B cell (primary cell): ENCODE measurements at regions of chr20 and their contacts with region 1.

Region 1: GRCh38 chr20:5529331-5530148 is 212.8 kb upstream of the PROKR2 start:
- DNase-seq: peak; percentile 85
- ATAC-seq: peak; percentile 91
- H3K4me3 ChIP-seq: no peak overlapping the region
- H3K4me3 Mint-ChIP-seq: peak overlapping the region; percentile 54
- H3K27ac ChIP-seq: no peak overlapping the region
- H3K27ac Mint-ChIP-seq: peak overlapping the region; percentile 56
- H3K4me1 ChIP-seq: peaks cover 7 to 12% of the 10 kb centered on the region in 2 donors
- H3K4me1 Mint-ChIP-seq: peaks cover 10% of the 10 kb centered on the region
- H3K27me3 ChIP-seq: no peaks in the 10 kb centered on the region
- H3K27me3 Mint-ChIP-seq: no peaks in the 10 kb centered on the region
- CTCF ChIP-seq: peak; percentile 79

Region 2: GRCh38 chr20:4748847-4749246 is 780.7 kb before region 1 on chr20:
- CTCF ChIA-PET with region 1: no interaction called
- POLR2A ChIA-PET with region 1: no interaction called
- intact Hi-C with region 1: no loop called
- DNase-seq: no peak
- ATAC-seq: no peak
- H3K4me3 ChIP-seq: no peak overlapping the region
- H3K4me3 Mint-ChIP-seq: no peak overlapping the region
- H3K27ac ChIP-seq: no peak overlapping the region
- H3K27ac Mint-ChIP-seq: no peak overlapping the region
- H3K4me1 ChIP-seq: no peaks in the 10 kb centered on the region
- H3K4me1 Mint-ChIP-seq: no peaks in the 10 kb centered on the region
- H3K27me3 ChIP-seq: peaks cover 0 to 5% (median 2%) of the 10 kb centered on the region in 4 experiments
- H3K27me3 Mint-ChIP-seq: no peaks in the 10 kb centered on the region
- CTCF ChIP-seq: no peak

Region 3: DNA sequence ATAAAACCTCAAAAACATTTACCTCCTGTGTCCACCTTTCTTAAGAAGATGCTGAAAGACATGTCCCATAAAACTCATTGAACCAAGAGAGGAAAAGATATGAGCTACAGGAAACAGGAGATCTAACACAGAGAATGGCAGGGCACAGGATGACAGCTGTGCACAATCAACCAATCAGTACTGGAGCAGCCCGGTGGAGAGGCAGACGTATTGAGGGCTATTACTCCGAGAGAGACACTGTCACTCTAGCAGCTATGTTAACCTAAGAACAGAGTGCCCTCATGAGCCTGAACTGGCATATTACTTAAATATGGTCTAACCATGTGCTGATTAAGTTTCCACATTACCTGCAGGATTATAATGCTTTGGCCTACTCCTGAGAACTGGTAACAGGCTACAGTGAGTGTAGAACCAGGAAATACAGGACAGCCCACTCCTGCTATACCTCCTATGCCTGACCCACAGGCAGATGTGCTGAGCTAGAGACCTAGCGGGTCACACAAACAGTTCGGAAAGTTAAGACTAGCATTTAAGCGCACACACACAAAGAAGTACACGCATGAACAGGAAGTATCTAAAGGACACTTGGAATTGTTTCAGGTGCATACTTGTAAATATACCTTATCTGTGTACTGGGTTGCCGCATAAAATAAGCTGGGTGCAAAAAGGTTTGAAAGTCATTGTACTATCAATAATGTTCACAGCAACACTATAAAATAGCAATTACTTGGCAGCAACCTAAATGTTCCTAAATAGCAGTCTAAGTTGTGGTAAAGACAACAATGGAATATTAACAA is 21.4 kb after region 1 on chr20:
- CTCF ChIA-PET with region 1: interaction called, 31 read pairs
- POLR2A ChIA-PET with region 1: no interaction called
- intact Hi-C with region 1: no loop called
- DNase-seq: no peak
- ATAC-seq: no peak
- H3K4me3 ChIP-seq: no peak overlapping the region
- H3K4me3 Mint-ChIP-seq: no peak overlapping the region
- H3K27ac ChIP-seq: no peak overlapping the region
- H3K27ac Mint-ChIP-seq: peak overlapping the region; percentile 3
- H3K4me1 ChIP-seq: no peaks in the 10 kb centered on the region
- H3K4me1 Mint-ChIP-seq: no peaks in the 10 kb centered on the region
- H3K27me3 ChIP-seq: no peaks in the 10 kb centered on the region
- H3K27me3 Mint-ChIP-seq: no peaks in the 10 kb centered on the region
- CTCF ChIP-seq: no peak

Region 4: GRCh38 chr20:5788385-5788895 is 258.9 kb after region 1 on chr20:
- CTCF ChIA-PET with region 1: interaction called, 137 read pairs
- POLR2A ChIA-PET with region 1: interaction called, 4 read pairs
- intact Hi-C with region 1: loop called (anchors 1 kb)
- DNase-seq: peak; percentile 89
- ATAC-seq: peak; percentile 99
- H3K4me3 ChIP-seq: no peak overlapping the region
- H3K4me3 Mint-ChIP-seq: no peak overlapping the region
- H3K27ac ChIP-seq: no peak overlapping the region
- H3K27ac Mint-ChIP-seq: peak overlapping the region; percentile 17
- H3K4me1 ChIP-seq: no peaks in the 10 kb centered on the region
- H3K4me1 Mint-ChIP-seq: peaks cover 11% of the 10 kb centered on the region
- H3K27me3 ChIP-seq: no peaks in the 10 kb centered on the region
- H3K27me3 Mint-ChIP-seq: no peaks in the 10 kb centered on the region
- CTCF ChIP-seq: peak; percentile 96

Region 5: GRCh38 chr20:5933802-5934436 is 404.4 kb after region 1 on chr20:
- CTCF ChIA-PET with region 1: interaction called, 13 read pairs
- POLR2A ChIA-PET with region 1: no interaction called
- intact Hi-C with region 1: loop called (anchors 1 kb)
- DNase-seq: peak; percentile 61
- ATAC-seq: peak; percentile 61
- H3K4me3 ChIP-seq: no peak overlapping the region
- H3K4me3 Mint-ChIP-seq: no peak overlapping the region
- H3K27ac ChIP-seq: no peak overlapping the region
- H3K27ac Mint-ChIP-seq: no peak overlapping the region
- H3K4me1 ChIP-seq: peaks cover 5 to 6% of the 10 kb centered on the region in 2 donors
- H3K4me1 Mint-ChIP-seq: peaks cover 7% of the 10 kb centered on the region
- H3K27me3 ChIP-seq: peaks cover 0 to 8% (median 2%) of the 10 kb centered on the region in 4 experiments
- H3K27me3 Mint-ChIP-seq: peaks cover 17% of the 10 kb centered on the region
- CTCF ChIP-seq: no peak

Region 6: GRCh38 chr20:6008254-6008653 is 478.7 kb after region 1 on chr20:
- CTCF ChIA-PET with region 1: interaction called, 21 read pairs
- POLR2A ChIA-PET with region 1: no interaction called
- intact Hi-C with region 1: loop called (anchors 1 kb)
- DNase-seq: no peak
- ATAC-seq: no peak
- H3K4me3 ChIP-seq: no peak overlapping the region
- H3K4me3 Mint-ChIP-seq: no peak overlapping the region
- H3K27ac ChIP-seq: no peak overlapping the region
- H3K27ac Mint-ChIP-seq: no peak overlapping the region
- H3K4me1 ChIP-seq: peaks cover 15 to 17% of the 10 kb centered on the region in 2 donors
- H3K4me1 Mint-ChIP-seq: peaks cover 30% of the 10 kb centered on the region
- H3K27me3 ChIP-seq: no peaks in the 10 kb centered on the region
- H3K27me3 Mint-ChIP-seq: no peaks in the 10 kb centered on the region
- CTCF ChIP-seq: no peak